Aorta (tissue), 5 donors: ENCODE measurements at regions of chr1 and their contacts with region 1.

Region 1: DNA sequence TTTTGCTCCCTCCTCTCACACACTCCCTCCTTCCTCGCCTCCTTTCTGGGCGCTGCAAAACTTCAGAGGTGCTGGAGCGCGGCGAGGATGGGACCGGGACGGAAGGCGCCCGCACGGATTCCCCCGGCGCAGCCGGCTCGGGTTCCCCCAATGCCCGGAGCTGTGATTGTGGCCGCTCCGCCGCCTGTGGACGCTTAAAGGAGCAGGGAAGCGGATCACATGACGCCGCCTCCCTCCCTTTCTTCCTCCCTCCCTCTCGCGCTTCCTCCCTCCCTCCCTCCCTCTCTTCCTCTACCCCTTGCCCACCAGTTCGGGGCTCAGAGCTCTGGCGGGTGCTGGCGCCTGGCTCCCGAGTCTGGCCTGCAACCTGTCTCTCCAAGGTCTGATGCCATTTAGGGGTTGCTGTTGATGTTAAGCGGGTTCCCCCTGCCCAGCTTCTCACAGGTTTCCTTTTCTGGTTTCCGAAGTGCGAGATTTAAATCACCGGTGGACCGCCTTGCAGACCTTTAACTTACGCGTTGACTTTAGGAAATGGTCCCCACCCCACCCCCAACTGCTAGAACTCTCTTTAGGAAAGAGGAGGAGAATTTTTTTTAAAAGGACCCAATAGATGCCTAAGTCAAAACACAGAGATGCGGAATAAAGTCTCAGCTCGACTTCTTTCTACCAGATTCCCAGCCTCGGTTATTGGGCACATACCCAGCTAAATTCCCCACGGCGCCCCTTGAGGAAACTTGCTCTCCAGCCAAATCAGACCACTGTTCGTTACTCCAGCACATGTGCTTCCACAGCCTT is at the start of gene WLS:
- DNase-seq: peak; percentile 89 to 92
- ATAC-seq: peak; percentile 90
- H3K4me3 ChIP-seq: peak within 1 kb of the TSS; percentile 36 to 93
- H3K27ac ChIP-seq: peak within 1 kb of the TSS in 1 of 2 donors; percentile 93
- H3K4me1 ChIP-seq: no peaks in the 10 kb centered on the region
- H3K27me3 ChIP-seq: no peaks in the 10 kb centered on the region
- total RNA-seq, gene WLS: 47.3 to 81.5 TPM

Region 2: GRCh38 chr1:67264899-67265298 is 967.7 kb before region 1 on chr1:
- intact Hi-C with region 1: no loop called
- DNase-seq: no peak
- ATAC-seq: no peak
- H3K4me3 ChIP-seq: no peak overlapping the region
- H3K27ac ChIP-seq: no peak overlapping the region
- H3K4me1 ChIP-seq: no peaks in the 10 kb centered on the region
- H3K27me3 ChIP-seq: no peaks in the 10 kb centered on the region

Region 3: DNA sequence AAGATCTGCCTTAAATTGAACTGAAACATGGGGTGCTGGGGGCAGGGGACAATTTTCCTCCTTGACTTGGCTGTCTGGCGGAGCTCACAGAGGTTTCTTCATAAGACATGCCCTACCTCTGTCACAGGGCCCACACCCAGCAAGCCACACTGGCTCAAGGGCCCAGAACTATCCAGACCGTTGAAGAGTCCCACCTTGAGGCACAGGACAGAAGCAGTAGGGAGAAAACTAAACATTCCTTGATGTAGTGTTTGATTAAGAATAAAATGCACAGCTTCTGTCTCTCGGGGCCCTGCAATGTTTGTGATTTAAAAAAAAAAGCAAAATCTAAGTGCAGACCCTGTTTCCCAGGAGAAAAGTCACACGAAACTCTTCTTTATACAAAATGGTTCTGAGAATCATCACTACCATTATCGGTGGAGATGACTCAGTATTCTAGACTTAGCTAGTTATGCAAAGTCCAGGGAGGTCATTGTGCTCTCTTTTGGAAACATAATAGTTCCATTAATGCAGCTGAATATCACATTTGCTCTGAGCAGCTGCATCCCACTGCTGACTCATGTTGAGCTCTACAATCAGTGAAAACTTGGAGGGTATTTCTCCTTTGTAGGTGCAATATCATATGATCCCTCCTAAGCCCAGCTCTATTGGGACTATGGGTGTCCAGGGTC is 128.5 kb before region 1 on chr1:
- intact Hi-C with region 1: no loop called
- DNase-seq: no peak
- ATAC-seq: no peak
- H3K4me3 ChIP-seq: no peak overlapping the region
- H3K27ac ChIP-seq: no peak overlapping the region
- H3K4me1 ChIP-seq: no peaks in the 10 kb centered on the region
- H3K27me3 ChIP-seq: no peaks in the 10 kb centered on the region

Region 4: DNA sequence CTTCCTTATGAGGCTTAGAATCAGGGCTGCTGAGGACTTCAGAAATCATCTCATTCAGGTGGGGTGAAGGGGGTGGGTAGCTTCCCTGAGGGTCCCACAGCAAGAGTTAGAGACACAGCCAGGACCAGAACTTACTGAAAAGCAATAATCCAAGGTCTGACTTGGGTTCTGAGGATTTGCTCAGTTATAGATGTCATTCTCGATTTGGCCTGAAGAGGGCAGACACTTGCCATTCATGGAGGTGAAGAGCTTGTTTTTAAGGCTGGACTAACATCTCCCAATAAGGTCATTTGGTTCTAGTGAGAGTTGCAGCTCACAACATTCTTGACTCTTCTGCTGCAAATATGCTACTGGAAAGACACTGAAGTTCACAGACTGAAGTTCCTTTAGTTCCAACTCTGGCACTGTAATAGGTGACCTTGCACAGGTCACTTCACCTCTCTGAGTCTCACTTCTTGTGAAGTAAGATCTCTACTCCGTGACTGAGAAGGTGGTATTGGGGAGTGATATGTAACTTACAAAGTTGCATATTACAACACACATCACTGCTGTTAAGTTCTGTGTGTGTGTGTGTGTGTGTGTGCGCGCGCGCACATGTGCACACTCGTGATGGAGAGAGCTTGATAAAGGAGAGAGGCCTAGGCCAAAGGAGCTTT is 112.3 kb before region 1 on chr1:
- intact Hi-C with region 1: loop called in 1 of 2 experiments (anchors 5 kb)
- DNase-seq: no peak
- ATAC-seq: peak; percentile 93
- H3K4me3 ChIP-seq: no peak overlapping the region
- H3K27ac ChIP-seq: no peak overlapping the region
- H3K4me1 ChIP-seq: no peaks in the 10 kb centered on the region
- H3K27me3 ChIP-seq: no peaks in the 10 kb centered on the region

Region 5: DNA sequence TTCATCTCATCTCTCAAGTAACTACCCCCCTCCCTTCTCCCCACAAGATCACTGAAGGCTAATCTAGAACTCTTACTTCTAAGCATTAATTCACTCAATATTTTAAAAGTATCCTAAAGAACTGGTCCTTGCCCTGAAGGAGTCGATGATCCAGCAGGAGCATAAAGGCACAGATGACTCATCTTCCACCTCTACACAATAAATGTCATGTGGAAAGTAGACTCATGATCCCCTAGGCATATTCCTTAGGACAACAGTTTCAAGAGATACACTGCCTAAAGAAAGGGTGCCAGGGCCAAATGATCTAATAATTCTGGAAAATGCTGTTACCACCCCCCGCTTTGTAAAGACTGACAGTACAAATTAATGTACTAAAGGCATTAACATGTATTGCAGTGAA is 96.4 kb before region 1 on chr1:
- intact Hi-C with region 1: loop called in 1 of 2 experiments (anchors 5 kb)
- DNase-seq: no peak
- ATAC-seq: no peak
- H3K4me3 ChIP-seq: no peak overlapping the region
- H3K27ac ChIP-seq: no peak overlapping the region
- H3K4me1 ChIP-seq: peaks cover 2 to 3% of the 10 kb centered on the region in 2 donors
- H3K27me3 ChIP-seq: no peaks in the 10 kb centered on the region

Region 6: GRCh38 chr1:68173911-68174737 is 58.4 kb before region 1 on chr1:
- intact Hi-C with region 1: loop called (anchors 5 kb)
- DNase-seq: peak; percentile 76 to 78
- ATAC-seq: peak; percentile 85
- H3K4me3 ChIP-seq: no peak overlapping the region
- H3K27ac ChIP-seq: peak overlapping the region; percentile 46 to 70
- H3K4me1 ChIP-seq: peaks cover 2 to 23% of the 10 kb centered on the region in 2 donors
- H3K27me3 ChIP-seq: no peaks in the 10 kb centered on the region

Region 7: GRCh38 chr1:68197891-68198290 is 34.7 kb before region 1 on chr1:
- intact Hi-C with region 1: loop called in 1 of 2 experiments (anchors 5 kb)
- DNase-seq: no peak
- ATAC-seq: no peak
- H3K4me3 ChIP-seq: no peak overlapping the region
- H3K27ac ChIP-seq: no peak overlapping the region
- H3K4me1 ChIP-seq: peaks cover 2 to 10% of the 10 kb centered on the region in 2 donors
- H3K27me3 ChIP-seq: no peaks in the 10 kb centered on the region

Region 8: DNA sequence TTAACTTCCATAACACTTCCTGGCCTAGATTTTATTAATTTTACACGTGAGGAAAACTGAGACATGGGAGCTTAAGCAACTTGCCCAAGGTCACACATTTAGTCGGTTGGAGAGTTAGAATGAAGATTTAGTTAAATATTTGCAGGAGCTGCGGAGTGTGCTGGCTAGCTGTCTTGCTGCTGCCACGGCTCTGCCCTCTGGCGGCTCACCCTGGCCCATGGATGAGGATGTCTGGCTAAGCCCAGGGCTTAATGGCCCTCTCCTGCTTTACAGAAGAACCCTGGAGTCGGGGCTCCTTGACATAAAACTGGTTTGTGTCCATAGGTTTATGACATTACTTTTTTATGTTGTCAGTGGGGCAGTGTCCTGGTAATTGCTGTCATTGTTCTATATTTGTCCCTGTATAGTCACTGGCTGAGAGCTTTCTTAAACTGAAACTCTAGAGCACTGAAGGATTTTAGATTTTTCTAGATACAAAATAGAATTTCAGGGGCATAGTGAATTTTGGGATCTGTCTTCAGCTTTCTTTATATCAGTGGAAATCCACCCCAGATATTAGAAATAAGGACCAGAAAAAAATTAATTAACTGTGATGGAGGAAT is 88.6 kb after region 1 on chr1:
- intact Hi-C with region 1: loop called in 1 of 2 experiments (anchors 5 kb)
- DNase-seq: peak; percentile 76 to 88
- ATAC-seq: peak; percentile 84
- H3K4me3 ChIP-seq: no peak overlapping the region
- H3K27ac ChIP-seq: no peak overlapping the region
- H3K4me1 ChIP-seq: no peaks in the 10 kb centered on the region
- H3K27me3 ChIP-seq: no peaks in the 10 kb centered on the region

Region 9: DNA sequence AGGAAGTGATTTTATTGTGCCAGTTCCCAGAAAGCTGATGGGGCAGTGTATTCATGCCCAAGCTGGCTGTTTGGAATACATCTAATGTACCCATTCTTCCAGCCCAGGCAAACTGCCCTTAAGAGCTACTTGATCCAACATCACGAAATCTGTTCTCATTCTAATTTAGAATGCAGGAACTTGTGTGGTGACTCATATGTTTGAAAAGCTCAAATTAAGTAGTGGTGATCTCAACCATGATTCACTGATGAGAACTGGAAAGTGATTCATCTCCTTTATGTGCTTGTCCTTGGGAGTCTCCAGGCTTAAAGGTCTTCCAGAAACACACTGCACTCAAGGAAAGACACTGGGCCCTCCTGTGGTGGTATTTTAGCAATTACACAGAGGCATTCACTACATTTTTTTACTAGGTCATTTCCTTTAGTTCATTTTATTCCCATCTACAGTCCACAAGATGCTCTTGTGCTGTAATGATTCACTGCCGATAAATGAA is 151.8 kb after region 1 on chr1:
- intact Hi-C with region 1: loop called in 1 of 2 experiments (anchors 10 kb)
- DNase-seq: peak in 1 of 2 donors; percentile 48
- ATAC-seq: peak; percentile 95
- H3K4me3 ChIP-seq: no peak overlapping the region
- H3K27ac ChIP-seq: peak overlapping the region; percentile 67 to 82
- H3K4me1 ChIP-seq: no peaks in the 10 kb centered on the region
- H3K27me3 ChIP-seq: no peaks in the 10 kb centered on the region